HepG2 (cell line): ENCODE measurements at regions of chr11 and their contacts with region 1.

Region 1: DNA sequence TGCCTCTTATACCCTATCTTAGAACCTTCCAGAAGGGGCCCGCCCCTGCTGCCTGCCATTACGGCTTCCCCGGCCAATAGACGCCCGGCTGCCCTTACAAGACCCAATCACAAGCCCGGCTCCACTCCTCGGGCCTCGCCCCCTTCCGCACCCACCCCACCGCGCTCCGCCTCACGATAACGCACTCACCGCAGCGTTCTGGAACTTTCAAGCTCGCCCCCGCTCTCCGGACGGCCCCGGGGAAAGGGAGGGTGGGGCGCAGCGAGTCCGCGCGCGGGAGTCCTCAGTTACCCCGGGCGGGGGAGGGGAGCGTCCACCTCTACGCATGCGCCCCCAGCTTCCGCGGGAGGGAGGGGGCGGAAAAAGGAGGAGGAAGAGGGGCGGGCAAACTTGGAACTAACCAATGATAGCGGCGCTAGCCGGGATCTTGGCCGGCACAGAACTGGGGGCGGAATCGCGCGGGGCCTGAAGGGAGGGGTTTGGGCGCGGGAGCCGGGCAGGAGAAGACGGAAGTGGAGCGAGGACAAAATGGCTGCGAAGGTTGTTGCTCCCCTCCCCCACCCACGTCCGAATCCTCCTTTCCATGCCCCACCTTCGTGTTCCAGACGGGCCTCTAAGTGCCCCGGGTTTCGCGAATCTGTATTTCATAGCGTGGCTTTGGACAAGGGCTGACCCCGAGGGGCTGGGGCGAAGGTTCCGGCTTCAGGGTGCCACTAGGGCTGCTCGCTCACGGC is 389 bp upstream of the HSPA8 start:
- DNase-seq: peak; percentile 97
- ATAC-seq: peak; percentile 94
- H3K4me3 ChIP-seq: peak overlapping the region; percentile 89 to 92 (median 90)
- H3K27ac ChIP-seq: peak overlapping the region; percentile 98
- H3K4me1 ChIP-seq: peaks cover 50% of the 10 kb centered on the region
- H3K27me3 ChIP-seq: no peaks in the 10 kb centered on the region; a peak in 1 of 5 replicates
- CTCF ChIP-seq: no peak
- EP300 ChIP-seq: peak in 1 of 2 experiments; percentile 73; a peak in 2 of 4 replicates
- POLR2A ChIP-seq: peak; percentile 58 to 63
- RAD21 ChIP-seq: no peak

Region 2: GRCh38 chr11:122202951-122203456 is 859.3 kb before region 1 on chr11:
- CTCF ChIA-PET with region 1: no interaction called
- POLR2A ChIA-PET with region 1: no interaction called
- in situ Hi-C with region 1: no loop called
- intact Hi-C with region 1: no loop called
- DNase-seq: peak; percentile 17
- ATAC-seq: peak; percentile 98
- H3K4me3 ChIP-seq: no peak overlapping the region
- H3K27ac ChIP-seq: no peak overlapping the region
- H3K4me1 ChIP-seq: peaks cover 19% of the 10 kb centered on the region
- H3K27me3 ChIP-seq: peaks cover 0 to 8% of the 10 kb centered on the region in 2 experiments; a peak in 1 of 5 replicates
- CTCF ChIP-seq: peak; percentile 87
- EP300 ChIP-seq: no peak
- POLR2A ChIP-seq: no peak
- RAD21 ChIP-seq: peak; percentile 82

Region 3: GRCh38 chr11:122749005-122749687 is 313.2 kb before region 1 on chr11:
- CTCF ChIA-PET with region 1: no interaction called
- POLR2A ChIA-PET with region 1: no interaction called
- in situ Hi-C with region 1: no loop called
- intact Hi-C with region 1: no loop called
- DNase-seq: no peak
- ATAC-seq: no peak
- H3K4me3 ChIP-seq: no peak overlapping the region
- H3K27ac ChIP-seq: no peak overlapping the region
- H3K4me1 ChIP-seq: no peaks in the 10 kb centered on the region
- H3K27me3 ChIP-seq: no peaks in the 10 kb centered on the region
- CTCF ChIP-seq: no peak
- EP300 ChIP-seq: no peak
- POLR2A ChIP-seq: no peak
- RAD21 ChIP-seq: no peak

Region 4: DNA sequence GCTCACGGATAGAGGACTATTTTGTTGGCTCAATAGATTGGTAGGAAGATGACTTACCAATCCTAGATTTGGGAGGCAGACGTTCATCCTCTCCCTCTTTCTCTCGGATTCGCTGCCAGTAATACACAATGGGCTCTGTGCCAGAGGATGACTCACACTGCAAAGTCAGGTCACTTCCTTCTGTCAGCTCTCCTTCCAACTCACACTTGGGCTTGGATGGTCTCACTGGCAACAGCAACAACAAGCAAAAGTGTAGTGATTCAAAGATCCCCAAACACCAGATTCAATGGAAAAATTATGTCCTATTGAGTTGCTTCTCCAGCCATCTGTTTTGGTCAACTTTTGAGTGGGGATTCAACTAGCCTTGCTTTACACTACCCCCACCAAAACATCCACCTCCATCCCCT is 21.3 kb after region 1 on chr11:
- CTCF ChIA-PET with region 1: no interaction called
- POLR2A ChIA-PET with region 1: interaction called, 20 read pairs
- in situ Hi-C with region 1: no loop called
- intact Hi-C with region 1: no loop called
- DNase-seq: peak; percentile 65
- ATAC-seq: peak; percentile 48; the same call in 2 of the 3 replicates
- H3K4me3 ChIP-seq: no peak overlapping the region
- H3K27ac ChIP-seq: no peak overlapping the region
- H3K4me1 ChIP-seq: peaks cover 7% of the 10 kb centered on the region; the same call in 1 of the 2 replicates
- H3K27me3 ChIP-seq: no peaks in the 10 kb centered on the region
- CTCF ChIP-seq: no peak
- EP300 ChIP-seq: no peak
- POLR2A ChIP-seq: no peak
- RAD21 ChIP-seq: no peak